A673 (cell line): ENCODE measurements at regions of chr18 and their contacts with region 1.

Region 1: GRCh38 chr18:3747176-3747973 is 297.4 kb downstream of the TGIF1 start:
- DNase-seq: no peak
- H3K4me3 ChIP-seq: no peak overlapping the region
- H3K27ac ChIP-seq: peak overlapping the region; percentile 39
- H3K4me1 ChIP-seq: peaks cover 10% of the 10 kb centered on the region
- H3K27me3 ChIP-seq: no peaks in the 10 kb centered on the region
- CTCF ChIP-seq: no peak

Region 2: DNA sequence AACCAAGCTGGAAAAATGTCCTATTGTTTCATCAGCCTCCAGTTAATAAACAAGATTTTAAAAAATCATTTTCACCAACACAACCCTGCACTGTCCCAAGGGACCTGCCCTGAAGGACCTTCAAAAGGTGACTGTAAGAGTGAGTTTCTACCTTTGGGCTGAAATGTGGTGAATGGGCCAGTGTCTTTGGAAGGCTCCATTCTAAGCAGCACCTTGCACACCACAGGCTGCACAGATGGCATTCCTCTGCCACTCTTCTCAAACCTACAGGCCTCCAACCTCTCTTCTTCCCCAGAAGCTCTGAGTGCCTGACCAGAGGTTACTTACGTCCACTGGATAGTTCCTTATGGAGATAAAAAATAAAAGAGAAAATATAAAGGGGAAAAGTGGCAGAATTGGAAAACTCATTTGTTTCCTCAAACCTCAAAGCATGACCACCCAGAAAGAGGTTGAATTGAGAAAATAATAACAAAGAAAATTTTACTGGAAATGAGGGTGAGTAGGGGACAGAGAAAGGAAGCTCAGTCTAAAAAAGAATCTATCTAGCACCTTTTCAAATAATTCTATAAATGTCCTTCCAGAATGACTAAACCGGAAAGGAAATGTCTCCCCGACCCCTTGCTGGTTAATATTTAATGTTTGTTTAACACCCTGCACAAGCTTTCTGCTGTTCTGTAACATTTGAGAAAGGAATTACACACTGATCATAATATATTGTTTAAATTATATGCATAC is 1351.8 kb before region 1 on chr18:
- CTCF ChIA-PET with region 1: no interaction called
- POLR2A ChIA-PET with region 1: no interaction called
- intact Hi-C with region 1: no loop called
- DNase-seq: no peak
- H3K4me3 ChIP-seq: no peak overlapping the region
- H3K27ac ChIP-seq: no peak overlapping the region
- H3K4me1 ChIP-seq: no peaks in the 10 kb centered on the region
- H3K27me3 ChIP-seq: peaks cover 29% of the 10 kb centered on the region
- CTCF ChIP-seq: no peak

Region 3: DNA sequence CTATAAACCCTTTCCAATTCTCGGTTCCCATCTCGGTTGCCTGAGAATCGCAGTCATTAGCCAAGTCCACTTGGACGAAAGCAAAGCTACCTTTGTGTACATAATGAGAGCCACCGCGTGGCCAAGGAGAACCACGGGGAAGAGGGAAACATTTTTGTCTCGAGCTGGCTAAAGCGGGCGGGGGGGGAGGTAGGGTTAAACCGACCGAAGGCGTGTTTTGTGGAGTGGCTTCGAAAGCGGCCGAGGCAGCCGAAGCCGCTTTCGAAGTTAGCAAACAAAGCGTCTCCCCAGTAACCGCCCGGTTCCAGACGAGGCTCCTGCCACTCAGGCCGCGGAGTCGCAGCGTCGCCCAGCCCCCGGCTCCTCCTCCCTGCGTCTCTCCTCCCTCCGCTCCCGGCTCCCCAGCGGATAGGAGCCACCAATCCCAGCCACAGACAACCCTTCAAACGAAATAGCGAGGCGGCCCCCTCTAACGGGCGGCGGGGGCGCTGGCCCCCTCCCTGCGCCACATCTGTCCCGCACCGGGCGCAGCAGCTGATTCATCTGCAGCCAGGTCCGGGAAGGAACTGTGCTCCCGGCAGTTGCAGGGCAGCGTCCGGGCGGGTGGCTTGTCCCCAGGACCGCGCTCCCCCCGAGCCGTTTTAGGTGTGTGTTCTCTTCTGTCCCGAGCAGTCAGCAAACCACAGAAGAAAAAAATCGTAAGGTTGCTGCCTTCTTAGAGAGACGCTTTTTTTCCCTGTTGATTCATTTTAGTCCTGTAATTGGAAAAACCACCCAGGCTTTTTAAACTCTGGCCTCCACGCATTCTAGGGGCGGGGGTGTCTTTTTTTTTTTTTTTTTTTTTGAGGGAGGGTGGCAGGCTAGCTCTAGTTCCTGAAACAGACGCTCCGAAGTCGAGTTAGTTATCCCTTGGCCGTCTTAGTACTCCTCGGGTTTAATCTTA is 299.2 kb before region 1 on chr18:
- CTCF ChIA-PET with region 1: no interaction called
- POLR2A ChIA-PET with region 1: interaction called, 4 read pairs
- intact Hi-C with region 1: loop called (anchors 10 kb)
- DNase-seq: peak; percentile 99
- H3K4me3 ChIP-seq: peak overlapping the region; percentile 91
- H3K27ac ChIP-seq: peak overlapping the region; percentile 96
- H3K4me1 ChIP-seq: peaks cover 23% of the 10 kb centered on the region
- H3K27me3 ChIP-seq: no peaks in the 10 kb centered on the region
- CTCF ChIP-seq: 0 out of 2 replicates have a peak, but pooled peaks have one; percentile 15

Region 4: GRCh38 chr18:3832025-3832638 is 84.8 kb after region 1 on chr18:
- CTCF ChIA-PET with region 1: interaction called, 7 read pairs
- POLR2A ChIA-PET with region 1: interaction called, 10 read pairs
- intact Hi-C with region 1: loop called (anchors 1 kb)
- DNase-seq: peak; percentile 78
- H3K4me3 ChIP-seq: no peak overlapping the region
- H3K27ac ChIP-seq: peak overlapping the region; percentile 98
- H3K4me1 ChIP-seq: peaks cover 84% of the 10 kb centered on the region
- H3K27me3 ChIP-seq: no peaks in the 10 kb centered on the region
- CTCF ChIP-seq: no peak

Region 5: DNA sequence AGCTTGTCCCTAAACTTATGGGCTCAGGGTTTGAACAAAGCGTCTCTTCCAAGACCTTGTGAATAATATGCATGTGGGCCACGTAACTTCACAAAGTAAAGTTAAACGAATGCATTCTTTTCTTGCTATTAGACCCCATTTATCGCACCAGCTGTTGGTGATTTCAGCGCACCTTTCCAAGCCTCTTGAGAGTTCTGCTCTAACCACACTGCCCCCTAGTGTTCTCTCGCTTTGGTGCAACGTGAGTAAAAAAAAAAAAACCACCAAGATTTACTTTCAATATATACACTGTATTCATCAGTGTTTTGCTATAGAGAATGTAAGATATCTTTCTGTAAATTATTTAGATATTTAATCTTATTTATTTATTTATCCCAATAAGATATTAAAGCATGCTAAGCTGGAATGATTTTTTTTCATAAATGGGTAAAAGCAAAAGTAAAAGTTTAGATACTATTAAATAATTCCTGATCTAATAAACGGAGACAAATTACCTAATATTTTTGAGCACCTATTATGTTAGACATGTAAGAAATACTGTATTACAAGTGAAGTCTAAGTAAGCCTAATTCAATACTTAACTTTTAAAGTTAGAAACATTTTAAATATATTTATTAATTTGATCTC is 248.2 kb after region 1 on chr18:
- CTCF ChIA-PET with region 1: no interaction called
- POLR2A ChIA-PET with region 1: no interaction called
- intact Hi-C with region 1: loop called (anchors 5 kb)
- DNase-seq: peak; percentile 93
- H3K4me3 ChIP-seq: peak overlapping the region; percentile 13
- H3K27ac ChIP-seq: peak overlapping the region; percentile 83
- H3K4me1 ChIP-seq: peaks cover 48% of the 10 kb centered on the region
- H3K27me3 ChIP-seq: no peaks in the 10 kb centered on the region
- CTCF ChIP-seq: peak; percentile 92

Region 6: DNA sequence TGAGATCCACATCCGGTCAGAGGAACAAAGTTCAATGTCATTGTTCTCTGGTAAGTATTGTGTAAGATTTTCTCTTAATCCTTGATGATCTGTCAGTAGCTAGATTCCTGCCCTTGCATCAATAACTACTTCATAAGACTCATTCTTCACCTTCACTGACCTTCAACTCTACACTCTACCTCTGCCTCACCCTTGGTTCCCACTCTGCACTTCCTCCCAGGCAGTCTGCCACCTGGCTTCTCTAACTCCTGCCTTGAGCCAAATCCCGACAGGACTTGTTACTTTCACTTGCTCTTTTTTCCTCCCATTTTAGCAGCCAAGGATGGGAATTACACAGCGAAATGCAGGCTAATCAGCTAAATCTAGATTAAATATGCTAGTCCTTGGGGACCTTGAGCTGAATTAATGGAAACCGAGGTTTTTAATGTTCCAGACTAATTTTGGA is 517.0 kb after region 1 on chr18:
- CTCF ChIA-PET with region 1: no interaction called
- POLR2A ChIA-PET with region 1: no interaction called
- intact Hi-C with region 1: loop called (anchors 10 kb)
- DNase-seq: peak; percentile 83
- H3K4me3 ChIP-seq: peak overlapping the region; percentile 27
- H3K27ac ChIP-seq: peak overlapping the region; percentile 79
- H3K4me1 ChIP-seq: peaks cover 62% of the 10 kb centered on the region
- H3K27me3 ChIP-seq: no peaks in the 10 kb centered on the region
- CTCF ChIP-seq: no peak